Naive thymus-derived CD8-positive, alpha-beta T cell (primary cell): ENCODE measurements at regions of chr3 and their contacts with region 1.

Region 1: GRCh38 chr3:12994607-12995388 is 78.4 kb downstream of the IQSEC1 start:
- DNase-seq: peak; percentile 77 to 90 (median 86)
- ATAC-seq: peak; percentile 85 to 86
- H3K4me3 Mint-ChIP-seq: peak overlapping the region; percentile 91 to 98 (median 96)
- H3K27ac Mint-ChIP-seq: peak overlapping the region; percentile 90 to 96 (median 94)
- H3K4me1 Mint-ChIP-seq: peaks cover 31 to 81% (median 64%) of the 10 kb centered on the region in 4 donors
- H3K27me3 Mint-ChIP-seq: no peaks in the 10 kb centered on the region

Region 2: GRCh38 chr3:13012228-13012691 is 17.5 kb after region 1 on chr3:
- POLR2A ChIA-PET with region 1: interaction called, 41 read pairs
- DNase-seq: peak in 3 of 10 donors; percentile 14 to 37 (median 16)
- ATAC-seq: no peak
- H3K4me3 Mint-ChIP-seq: peak overlapping the region; percentile 58 to 93 (median 84)
- H3K27ac Mint-ChIP-seq: peak overlapping the region; percentile 95 to 99 (median 99)
- H3K4me1 Mint-ChIP-seq: peaks cover 60 to 97% (median 88%) of the 10 kb centered on the region in 4 donors
- H3K27me3 Mint-ChIP-seq: no peaks in the 10 kb centered on the region